CD4-positive, alpha-beta memory T cell (primary cell): ENCODE measurements at regions of chr19 and their contacts with region 1.

Region 1: DNA sequence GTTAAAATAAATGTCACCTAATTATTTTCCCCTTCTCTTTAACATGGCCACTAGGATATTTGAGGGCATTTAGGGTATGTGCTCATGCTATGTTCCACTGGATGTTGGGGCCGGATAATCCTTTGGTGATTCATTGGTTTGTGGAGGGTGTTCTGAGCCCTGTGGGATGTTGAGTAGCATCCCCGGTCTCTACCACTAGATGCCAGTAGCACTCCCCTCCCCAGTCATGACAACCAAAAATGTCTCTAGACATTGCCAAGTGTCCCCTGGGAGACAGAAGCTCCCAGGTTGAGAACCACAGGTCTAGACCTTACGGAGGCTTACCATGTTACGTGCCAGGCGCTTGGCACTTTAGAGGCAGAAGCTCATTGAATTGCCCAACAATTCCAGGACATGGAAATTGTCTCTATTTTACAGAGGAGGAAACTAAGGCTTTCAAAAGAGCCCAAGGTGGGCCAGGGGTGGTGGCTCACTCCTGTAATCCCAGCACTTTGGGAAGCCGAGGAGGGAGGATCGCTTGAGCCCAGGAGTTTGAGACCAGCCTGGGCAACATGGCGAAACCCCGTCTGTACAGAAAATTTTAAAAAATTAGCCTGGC is 14.1 kb downstream of the SHANK1 start:
- DNase-seq: peak in 1 of 5 donors; percentile 17
- H3K4me3 ChIP-seq: no peak overlapping the region
- H3K4me3 Mint-ChIP-seq: no peak overlapping the region
- H3K27ac ChIP-seq: no peak overlapping the region
- H3K27ac Mint-ChIP-seq: no peak overlapping the region
- H3K4me1 ChIP-seq: no peaks in the 10 kb centered on the region
- H3K4me1 Mint-ChIP-seq: no peaks in the 10 kb centered on the region
- H3K27me3 ChIP-seq: no peaks in the 10 kb centered on the region
- H3K27me3 Mint-ChIP-seq: peaks cover 21 to 37% of the 10 kb centered on the region in 2 donors

Region 2: DNA sequence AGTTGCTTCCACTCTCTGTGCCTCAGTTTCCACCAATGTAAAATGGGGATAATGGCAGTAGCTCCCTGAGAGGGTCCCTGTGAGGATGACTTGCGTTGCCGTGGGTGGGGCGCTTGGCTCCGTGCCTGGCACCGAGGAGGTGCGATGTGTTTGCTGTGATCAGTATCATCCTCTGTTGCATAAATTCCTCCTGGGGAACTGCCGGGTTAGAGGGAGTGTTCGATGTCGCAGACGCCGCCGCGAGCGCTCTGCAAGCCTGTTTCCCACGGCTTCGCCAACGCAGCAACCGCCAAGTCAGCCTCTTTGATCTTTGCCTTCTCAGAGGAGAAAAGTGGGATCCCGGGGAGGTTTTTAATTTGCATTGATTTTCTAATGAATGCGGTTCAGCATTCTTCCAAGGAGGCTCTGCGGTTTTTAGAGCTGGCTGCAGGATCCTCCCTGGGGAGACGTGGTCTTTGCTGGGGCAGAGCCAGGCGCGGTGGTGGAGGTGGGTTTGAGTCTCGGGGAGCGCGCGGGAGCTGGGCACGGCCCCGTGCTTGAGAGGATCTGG is 72.3 kb after region 1 on chr19:
- CTCF ChIA-PET with region 1: no interaction called
- POLR2A ChIA-PET with region 1: no interaction called
- intact Hi-C with region 1: loop called (anchors 1 kb)
- DNase-seq: no peak
- H3K4me3 ChIP-seq: no peak overlapping the region
- H3K4me3 Mint-ChIP-seq: peak overlapping the region in 1 of 8 donors; percentile 11
- H3K27ac ChIP-seq: no peak overlapping the region
- H3K27ac Mint-ChIP-seq: no peak overlapping the region
- H3K4me1 ChIP-seq: no peaks in the 10 kb centered on the region
- H3K4me1 Mint-ChIP-seq: peaks cover 0 to 8% (median 3%) of the 10 kb centered on the region in 4 donors
- H3K27me3 ChIP-seq: peaks cover 24% of the 10 kb centered on the region
- H3K27me3 Mint-ChIP-seq: peaks cover 41 to 53% of the 10 kb centered on the region in 2 donors

Region 3: DNA sequence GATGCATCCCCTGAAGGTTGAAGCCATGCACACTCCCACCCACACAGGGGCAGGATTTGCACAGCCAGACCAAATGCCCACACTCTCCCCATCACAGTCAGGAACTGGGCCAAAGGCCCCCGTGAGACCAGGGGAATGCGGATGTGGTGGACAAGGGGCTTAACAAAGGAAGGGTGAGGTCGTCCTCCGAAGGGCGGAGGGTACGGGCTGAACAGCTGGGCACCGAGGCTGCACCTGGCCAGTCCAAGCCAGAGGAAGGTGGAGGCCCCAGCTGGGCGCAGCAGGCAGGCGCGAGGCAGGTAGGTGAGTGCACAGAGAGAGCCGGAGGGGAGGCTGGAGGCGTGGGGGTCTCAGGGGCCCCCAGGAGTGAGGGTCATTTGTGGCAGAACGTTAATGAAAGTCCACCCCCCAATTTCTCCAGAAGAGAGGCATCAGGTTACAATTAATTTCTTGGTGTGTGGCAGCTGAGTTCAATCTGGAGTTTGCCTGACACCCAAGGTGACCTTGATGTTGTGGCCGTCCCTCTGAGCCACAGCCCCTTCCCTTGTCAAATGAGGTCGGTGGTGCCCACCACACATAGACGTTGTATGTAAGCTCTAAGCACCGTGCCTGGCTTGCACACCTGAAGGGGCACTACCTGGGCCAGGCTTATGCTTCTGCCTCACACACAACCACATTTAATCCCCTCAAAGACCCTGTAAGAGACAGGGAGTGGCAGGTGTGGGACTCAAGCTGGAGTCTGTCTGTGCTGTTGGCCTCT is 124.9 kb after region 1 on chr19:
- CTCF ChIA-PET with region 1: no interaction called
- POLR2A ChIA-PET with region 1: no interaction called
- intact Hi-C with region 1: no loop called
- DNase-seq: peak in 1 of 5 donors; percentile 28
- H3K4me3 ChIP-seq: no peak overlapping the region
- H3K4me3 Mint-ChIP-seq: no peak overlapping the region
- H3K27ac ChIP-seq: no peak overlapping the region
- H3K27ac Mint-ChIP-seq: no peak overlapping the region
- H3K4me1 ChIP-seq: peaks cover 6% of the 10 kb centered on the region
- H3K4me1 Mint-ChIP-seq: peaks cover 0 to 7% (median 3%) of the 10 kb centered on the region in 4 donors
- H3K27me3 ChIP-seq: peaks cover 6% of the 10 kb centered on the region
- H3K27me3 Mint-ChIP-seq: peaks cover 20 to 37% of the 10 kb centered on the region in 2 donors